Activated naive CD4-positive, alpha-beta T cell treated with anti-CD3 and anti-CD28 coated beads, Interleukin-2, amount 10 ng/mL, durations not matched to agents 7 days and 5 days (primary cell): ENCODE measurements at regions of chr12 and their contacts with region 1.

Region 1: DNA sequence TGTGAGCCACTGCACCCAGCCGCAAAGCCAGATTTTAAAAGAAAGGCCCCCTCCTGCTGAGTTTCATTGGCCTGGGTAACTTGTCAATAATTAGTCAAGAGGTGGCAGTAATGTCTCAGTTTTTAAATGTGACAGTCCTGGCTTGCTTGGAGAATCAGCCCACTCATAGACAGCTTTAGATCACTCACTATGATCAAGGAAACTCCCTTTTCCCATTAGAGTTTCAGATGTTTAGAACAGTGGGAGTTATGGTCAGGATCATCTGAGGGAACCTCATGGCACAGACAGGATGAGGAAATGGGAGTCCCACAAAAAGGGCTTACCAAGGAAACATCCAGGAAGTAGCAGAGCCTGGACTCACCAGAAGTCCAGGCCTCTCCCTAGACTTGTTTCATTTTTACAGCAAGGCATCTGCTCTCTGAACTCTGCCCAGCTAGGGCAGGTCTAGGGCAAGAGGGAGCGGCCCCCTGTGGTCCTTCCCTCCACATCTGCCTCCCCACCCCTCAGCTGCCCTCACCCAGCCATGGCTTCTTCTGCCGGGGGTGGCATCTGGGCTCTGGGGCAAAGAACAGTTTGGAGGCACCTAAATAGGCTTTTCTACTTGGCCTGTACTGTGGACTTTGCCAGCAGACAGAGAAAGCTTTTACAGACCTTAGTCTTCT is 11.2 kb downstream of the BCL2L14 start:
- DNase-seq: no peak
- H3K4me3 Mint-ChIP-seq: no peak overlapping the region
- H3K27ac Mint-ChIP-seq: no peak overlapping the region
- H3K4me1 Mint-ChIP-seq: peaks cover 4% of the 10 kb centered on the region
- H3K27me3 Mint-ChIP-seq: no peaks in the 10 kb centered on the region

Region 2: DNA sequence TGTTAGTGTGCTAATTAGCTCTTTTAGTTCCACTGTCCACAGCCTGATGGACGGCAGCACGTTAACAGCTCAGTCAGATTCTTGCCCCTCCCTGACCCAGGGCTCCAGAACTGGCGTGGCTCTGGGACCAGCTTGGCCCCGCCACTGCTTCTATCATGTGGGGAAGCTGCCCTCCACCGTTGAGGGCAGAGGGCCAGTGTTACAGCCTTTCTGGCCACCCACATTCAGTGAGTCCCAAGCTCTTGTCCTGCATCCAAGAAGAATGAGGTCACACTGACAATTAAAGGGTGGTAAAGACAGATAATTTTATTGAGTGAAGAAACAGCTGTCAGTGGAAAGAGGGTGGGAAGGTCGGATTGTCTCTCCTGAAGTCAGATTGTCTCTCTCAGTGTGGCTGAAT is 25.7 kb after region 1 on chr12:
- CTCF ChIA-PET with region 1: no interaction called
- DNase-seq: no peak
- H3K4me3 Mint-ChIP-seq: no peak overlapping the region
- H3K27ac Mint-ChIP-seq: no peak overlapping the region
- H3K4me1 Mint-ChIP-seq: no peaks in the 10 kb centered on the region
- H3K27me3 Mint-ChIP-seq: peaks cover 10% of the 10 kb centered on the region

Region 3: DNA sequence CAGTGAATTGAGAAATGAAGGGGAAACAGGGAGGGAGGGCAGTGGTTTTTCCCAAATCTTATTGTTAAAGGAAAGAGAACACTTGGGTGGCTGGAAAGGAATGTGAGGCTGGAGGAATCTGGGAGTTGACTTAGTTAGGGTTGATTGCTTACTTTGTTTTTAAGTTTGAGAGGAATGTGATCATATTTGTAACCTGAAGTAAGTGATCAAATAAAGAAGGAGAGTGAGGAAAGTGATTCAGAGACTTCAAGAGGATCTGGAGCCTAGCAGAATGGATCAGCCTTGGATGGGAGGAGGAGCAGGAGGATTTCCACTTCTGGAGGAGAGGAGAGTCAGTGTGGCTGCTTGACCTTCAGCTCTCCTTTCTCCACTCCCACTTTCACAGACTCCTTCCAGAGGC is 190.9 kb after region 1 on chr12:
- CTCF ChIA-PET with region 1: no interaction called
- DNase-seq: no peak
- H3K4me3 Mint-ChIP-seq: no peak overlapping the region
- H3K27ac Mint-ChIP-seq: no peak overlapping the region
- H3K4me1 Mint-ChIP-seq: no peaks in the 10 kb centered on the region
- H3K27me3 Mint-ChIP-seq: peaks cover 21% of the 10 kb centered on the region

Region 4: GRCh38 chr12:12327802-12328201 is 245.8 kb after region 1 on chr12:
- CTCF ChIA-PET with region 1: interaction called, 12 read pairs
- DNase-seq: peak; percentile 22
- H3K4me3 Mint-ChIP-seq: no peak overlapping the region
- H3K27ac Mint-ChIP-seq: no peak overlapping the region
- H3K4me1 Mint-ChIP-seq: peaks cover 8% of the 10 kb centered on the region
- H3K27me3 Mint-ChIP-seq: peaks cover 17% of the 10 kb centered on the region